Activated T-helper 1 cell treated with anti-CD3 and anti-CD28 coated beads, Interleukin-12 subunit alpha, Interleukin-12 subunit beta, Interleukin-2, Interleukin-4 antibody, amounts not matched to agents 30 ng/mL and 10 ng/mL and 1 ng/mL, durations not matched to agents 14 hours and 24 hours and 36 hours (primary cell): ENCODE measurements at regions of chr19 and their contacts with region 1.

Region 1: GRCh38 chr19:36489118-36489919 is at the start of gene ZNF566:
- DNase-seq: peak; percentile 88
- H3K4me3 Mint-ChIP-seq: peak within 1 kb of the TSS; percentile 96
- H3K27ac Mint-ChIP-seq: peak within 1 kb of the TSS; percentile 97
- H3K4me1 Mint-ChIP-seq: peaks cover 18% of the 10 kb centered on the region
- H3K27me3 Mint-ChIP-seq: no peaks in the 10 kb centered on the region
- total RNA-seq, gene ZNF566: 6.9 and 8.7 TPM in 2 replicates

Region 2: DNA sequence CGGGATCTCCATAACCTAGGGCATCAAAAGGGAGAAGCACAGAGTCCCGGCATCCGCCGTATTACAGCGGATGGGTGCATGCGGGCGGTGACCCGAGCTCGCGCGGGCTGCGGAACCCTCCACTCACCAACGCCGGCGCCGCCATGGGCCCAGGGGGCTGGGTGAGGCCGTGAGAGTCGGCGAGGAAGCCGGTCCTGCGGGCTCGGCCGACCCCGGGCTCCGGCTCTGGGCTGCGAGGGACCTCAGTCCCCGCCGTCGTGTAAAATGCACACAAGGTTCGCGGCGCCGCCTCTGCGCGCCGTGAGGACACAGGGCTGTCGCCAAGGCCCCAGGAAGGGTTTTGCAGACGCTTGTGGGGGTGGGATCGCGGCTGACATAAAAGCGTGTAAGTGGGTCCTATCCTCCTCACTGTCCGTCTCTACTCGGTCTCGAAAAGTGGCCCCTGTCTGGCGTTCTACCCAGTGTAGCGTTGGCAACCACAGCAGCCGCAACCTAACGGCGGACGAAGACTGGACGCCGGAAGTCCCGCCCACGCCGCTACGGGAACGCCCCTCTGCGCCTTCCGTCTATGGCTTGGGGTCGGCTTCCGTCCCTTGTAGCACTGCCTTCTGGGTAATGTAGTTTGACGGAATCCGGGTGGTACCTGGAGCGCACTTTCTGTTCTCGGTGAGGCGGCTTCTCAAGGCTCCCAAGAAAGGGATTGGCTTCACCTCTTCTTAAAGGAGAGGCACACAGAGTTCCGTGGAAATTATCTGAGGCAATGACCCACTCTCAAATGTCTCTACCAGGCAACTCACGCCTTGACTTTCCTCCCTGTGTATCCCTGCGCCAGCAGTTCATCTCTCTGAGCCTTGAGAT is 1716.4 kb before region 1 on chr19 and contains the start of gene ZNF599:
- intact Hi-C with region 1: loop called (anchors 2 kb)
- DNase-seq: peak; percentile 85
- H3K4me3 Mint-ChIP-seq: peak within 1 kb of the TSS; percentile 91
- H3K27ac Mint-ChIP-seq: peak within 1 kb of the TSS; percentile 95
- H3K4me1 Mint-ChIP-seq: peaks cover 23% of the 10 kb centered on the region
- H3K27me3 Mint-ChIP-seq: no peaks in the 10 kb centered on the region
- total RNA-seq, gene ZNF599: 2.3 and 2.6 TPM in 2 replicates

Region 3: GRCh38 chr19:36378625-36379509 is 110.5 kb before region 1 on chr19 and contains the start of gene ZFP14:
- intact Hi-C with region 1: loop called (anchors 1 kb)
- DNase-seq: peak; percentile 91
- H3K4me3 Mint-ChIP-seq: peak within 1 kb of the TSS; percentile 86
- H3K27ac Mint-ChIP-seq: peak within 1 kb of the TSS; percentile 73
- H3K4me1 Mint-ChIP-seq: peaks cover 13% of the 10 kb centered on the region
- H3K27me3 Mint-ChIP-seq: no peaks in the 10 kb centered on the region
- total RNA-seq, gene ZFP14: 0.83 and 1.7 TPM in 2 replicates

Region 4: GRCh38 chr19:36392916-36393673 is 96.2 kb before region 1 on chr19:
- intact Hi-C with region 1: no loop called
- DNase-seq: no peak
- H3K4me3 Mint-ChIP-seq: no peak overlapping the region
- H3K27ac Mint-ChIP-seq: no peak overlapping the region
- H3K4me1 Mint-ChIP-seq: no peaks in the 10 kb centered on the region
- H3K27me3 Mint-ChIP-seq: no peaks in the 10 kb centered on the region

Region 5: GRCh38 chr19:36573020-36573885 is 83.9 kb after region 1 on chr19 and contains the start of gene ZNF529:
- intact Hi-C with region 1: loop called (anchors 1 kb)
- DNase-seq: peak; percentile 85
- H3K4me3 Mint-ChIP-seq: peak within 1 kb of the TSS; percentile 89
- H3K27ac Mint-ChIP-seq: peak within 1 kb of the TSS; percentile 98
- H3K4me1 Mint-ChIP-seq: peaks cover 31% of the 10 kb centered on the region
- H3K27me3 Mint-ChIP-seq: no peaks in the 10 kb centered on the region
- total RNA-seq, gene ZNF529: 20.3 and 20.7 TPM in 2 replicates

Region 6: DNA sequence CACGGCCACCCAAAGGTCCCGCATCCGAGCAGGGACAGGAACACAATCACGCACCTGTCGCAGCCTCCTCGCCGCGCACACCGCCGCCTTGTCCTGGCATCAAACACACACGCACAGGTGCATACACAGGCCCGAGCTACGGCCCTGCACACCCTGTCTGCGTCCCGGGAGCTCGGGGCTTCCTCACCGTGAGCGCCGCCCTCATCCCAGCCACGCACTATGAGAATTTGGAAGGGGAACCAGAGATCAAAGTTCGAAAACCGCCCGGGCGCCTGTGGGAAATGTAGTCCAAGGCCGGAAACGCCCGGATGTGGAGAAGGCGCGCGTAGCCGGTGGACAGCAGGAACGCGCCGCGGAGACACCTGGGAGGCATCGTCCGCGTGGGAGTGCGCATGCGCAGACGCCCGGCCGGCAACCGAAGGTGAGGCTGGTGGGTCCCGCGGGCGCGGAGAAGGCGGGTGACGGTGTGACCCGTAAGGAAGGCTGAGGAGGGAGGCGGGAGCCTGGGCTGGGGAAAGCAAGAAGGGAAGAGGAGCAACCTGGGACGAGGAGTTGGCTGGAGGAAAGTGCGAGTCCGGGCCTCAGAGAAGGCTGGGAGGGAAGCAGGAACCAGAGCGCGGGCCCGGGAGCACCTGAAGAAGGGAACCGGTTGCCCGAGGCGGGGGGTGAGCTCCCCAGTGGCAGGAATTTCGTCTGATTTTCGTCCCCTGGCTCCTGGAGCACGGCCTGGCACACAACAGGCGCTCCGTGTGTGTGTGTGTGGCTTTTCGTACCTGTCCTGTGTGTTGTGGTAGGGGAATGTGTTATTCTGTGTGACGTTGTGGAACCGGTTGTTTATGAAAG is 198.1 kb after region 1 on chr19 and contains the start of gene ZNF567:
- intact Hi-C with region 1: loop called (anchors 1 kb)
- DNase-seq: peak; percentile 97
- H3K4me3 Mint-ChIP-seq: peak within 1 kb of the TSS; percentile 95
- H3K27ac Mint-ChIP-seq: peak within 1 kb of the TSS; percentile 91
- H3K4me1 Mint-ChIP-seq: peaks cover 24% of the 10 kb centered on the region
- H3K27me3 Mint-ChIP-seq: peaks cover 2% of the 10 kb centered on the region
- total RNA-seq, gene ZNF567: 5.8 and 8.5 TPM in 2 replicates

Region 7: DNA sequence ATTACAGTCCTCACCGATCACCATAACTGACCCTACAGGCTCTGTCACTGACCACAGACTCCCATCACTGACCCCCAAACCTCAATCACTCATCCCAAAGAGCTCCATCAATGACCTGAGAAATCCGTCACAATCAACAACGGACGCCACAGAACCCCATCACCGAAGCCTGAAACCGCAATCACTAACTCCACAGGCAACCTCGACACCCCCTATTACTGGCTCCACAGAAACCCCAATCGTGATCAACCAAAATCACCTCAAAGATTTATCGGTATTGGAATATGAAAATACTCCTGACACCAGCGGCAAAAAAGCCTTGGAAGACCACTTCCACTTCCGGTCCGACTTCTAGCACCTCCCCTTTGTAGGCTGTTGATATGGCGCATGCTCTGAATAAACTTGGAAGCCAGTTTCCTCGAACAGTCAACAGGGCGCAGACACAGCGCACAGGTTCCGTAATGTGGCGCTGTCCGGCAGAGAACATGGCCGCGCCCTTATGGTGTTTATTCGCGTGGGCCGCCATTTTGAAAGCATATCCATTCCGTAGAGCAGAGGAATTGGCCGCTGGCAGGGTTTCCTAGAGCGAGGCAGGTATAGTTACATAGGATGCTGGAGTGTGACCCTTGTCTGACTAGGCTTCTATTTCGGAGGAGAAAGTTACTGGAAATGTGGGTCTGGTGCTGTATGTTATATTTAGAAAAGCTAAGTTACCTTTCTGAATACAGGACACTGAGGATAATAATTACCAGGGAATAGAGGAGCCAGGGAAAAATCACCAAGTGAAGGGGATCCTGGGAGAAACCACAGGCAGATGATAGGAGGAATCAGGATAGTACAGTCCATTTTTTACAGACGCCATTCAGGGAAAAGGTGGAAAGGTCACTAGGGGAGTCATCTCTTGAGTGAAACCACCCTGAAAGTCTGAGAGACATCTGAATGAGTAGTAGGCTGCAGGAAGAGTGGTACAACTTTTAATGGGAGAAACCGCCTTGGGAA is 683.3 kb after region 1 on chr19 and contains the start of gene ZNF585A:
- intact Hi-C with region 1: loop called (anchors 1 kb)
- DNase-seq: peak; percentile 74
- H3K4me3 Mint-ChIP-seq: no peak within 1 kb of the TSS
- H3K27ac Mint-ChIP-seq: no peak within 1 kb of the TSS
- H3K4me1 Mint-ChIP-seq: no peaks in the 10 kb centered on the region
- H3K27me3 Mint-ChIP-seq: no peaks in the 10 kb centered on the region
- total RNA-seq, gene ZNF585A: 1.2 and 2.6 TPM in 2 replicates